OCI-LY7 (cell line): ENCODE measurements at regions of chr11 and their contacts with region 1.

Region 1: GRCh38 chr11:18775492-18776292 is 15.9 kb downstream of the PTPN5 start:
- DNase-seq: peak; percentile 57
- H3K4me3 ChIP-seq: no peak overlapping the region
- H3K27ac ChIP-seq: no peak overlapping the region
- H3K4me1 ChIP-seq: no peaks in the 10 kb centered on the region
- CTCF ChIP-seq: peak; percentile 88

Region 2: DNA sequence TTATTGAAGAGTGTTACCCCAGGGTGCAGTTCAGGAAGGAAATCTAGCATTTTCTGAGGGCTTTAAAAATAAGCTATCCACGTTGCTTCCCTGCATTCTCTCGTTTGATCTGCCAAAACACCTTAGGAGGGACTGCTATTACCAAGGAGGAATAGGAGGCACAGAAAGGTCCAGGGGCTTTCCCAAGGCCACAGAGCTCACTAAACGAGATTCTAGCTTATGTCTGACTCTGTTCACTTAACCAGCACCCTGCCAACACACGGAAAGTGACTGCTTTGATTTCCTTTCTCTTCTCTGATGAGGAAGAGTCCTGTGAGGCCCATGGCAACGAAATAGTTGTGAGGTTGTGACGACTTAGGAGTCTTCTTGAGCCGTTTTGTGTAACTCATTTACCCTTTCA is 19.3 kb after region 1 on chr11:
- CTCF ChIA-PET with region 1: interaction called, 3 read pairs
- POLR2A ChIA-PET with region 1: interaction called, 10 read pairs
- intact Hi-C with region 1: no loop called
- DNase-seq: no peak
- H3K4me3 ChIP-seq: no peak overlapping the region
- H3K27ac ChIP-seq: no peak overlapping the region
- H3K4me1 ChIP-seq: no peaks in the 10 kb centered on the region
- CTCF ChIP-seq: no peak

Region 3: GRCh38 chr11:18802381-18803257 is 26.9 kb after region 1 on chr11:
- CTCF ChIA-PET with region 1: interaction called, 3 read pairs
- POLR2A ChIA-PET with region 1: interaction called, 4 read pairs
- intact Hi-C with region 1: loop called (anchors 1 kb)
- DNase-seq: peak; percentile 64
- H3K4me3 ChIP-seq: no peak overlapping the region
- H3K27ac ChIP-seq: no peak overlapping the region
- H3K4me1 ChIP-seq: no peaks in the 10 kb centered on the region
- CTCF ChIP-seq: peak; percentile 92

Region 4: DNA sequence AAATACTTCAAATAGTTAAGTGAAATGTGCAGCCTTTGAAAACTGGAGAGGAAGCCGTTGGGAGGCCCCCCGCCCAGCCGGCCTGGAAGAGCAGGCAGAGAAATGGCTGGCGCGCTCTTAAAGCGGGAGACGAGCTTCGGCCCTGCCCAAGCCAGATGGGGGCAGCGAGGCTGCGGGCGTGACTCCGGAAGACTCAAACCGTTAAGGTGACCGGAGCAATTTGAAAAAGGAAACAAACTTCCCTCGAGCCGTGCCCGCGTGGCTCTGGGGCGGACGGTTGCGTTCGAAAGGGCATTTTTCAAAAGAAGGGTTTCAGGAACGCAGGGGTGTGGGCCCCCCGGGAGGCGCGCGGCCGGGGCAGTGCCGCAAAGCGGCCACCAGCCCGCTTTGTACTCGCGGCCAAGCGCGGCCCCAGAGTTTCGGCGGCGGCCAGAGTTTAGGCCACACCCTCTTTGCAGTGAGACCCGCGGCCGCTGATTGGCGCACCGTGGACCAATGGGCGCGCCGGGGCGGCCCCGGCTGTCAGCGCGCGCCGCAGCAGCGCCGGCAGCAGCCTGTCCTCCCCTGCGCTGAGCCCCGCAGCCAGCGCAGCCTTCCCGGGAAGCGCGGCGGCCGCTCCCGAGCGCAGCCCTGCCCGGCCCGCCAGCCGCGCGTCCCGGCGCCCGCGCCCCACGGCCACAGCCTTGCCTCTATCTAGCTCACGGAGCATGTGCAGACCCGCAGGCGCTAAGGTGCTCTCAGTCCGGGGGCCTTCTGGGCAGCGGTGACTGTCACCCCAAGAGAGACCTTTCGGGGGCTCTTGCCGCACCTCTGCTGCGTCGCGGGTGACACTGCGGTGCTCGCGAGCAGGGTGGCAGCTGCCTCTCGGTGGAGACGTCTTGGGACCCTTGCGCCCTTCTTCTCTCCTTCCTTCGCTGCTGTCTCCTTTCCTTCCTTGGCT is 936.9 kb after region 1 on chr11 and contains the start of gene NAV2:
- CTCF ChIA-PET with region 1: no interaction called
- POLR2A ChIA-PET with region 1: no interaction called
- intact Hi-C with region 1: no loop called
- DNase-seq: peak; percentile 84
- H3K4me3 ChIP-seq: peak within 1 kb of the TSS; percentile 71
- H3K27ac ChIP-seq: no peak within 1 kb of the TSS
- H3K4me1 ChIP-seq: peaks cover 7% of the 10 kb centered on the region
- CTCF ChIP-seq: no peak
- total RNA-seq, gene NAV2: 0.06 and 0.39 TPM in 2 replicates